ENCODE measurements at regions of chr2 and their contacts with region 1.

Region 1: GRCh38 chr2:230781130-230781797 is 68.6 kb downstream of the CAB39 start:
- DNase-seq: peak; percentile 84
- H3K4me3 Mint-ChIP-seq: peak overlapping the region; percentile 24
- H3K27ac Mint-ChIP-seq: peak overlapping the region; percentile 77
- H3K4me1 Mint-ChIP-seq: peaks cover 68% of the 10 kb centered on the region
- H3K27me3 Mint-ChIP-seq: no peaks in the 10 kb centered on the region

Region 2: GRCh38 chr2:230738391-230738811 is 42.9 kb before region 1 on chr2:
- intact Hi-C with region 1: no loop called
- DNase-seq: peak; percentile 54
- H3K4me3 Mint-ChIP-seq: peak overlapping the region; percentile 24
- H3K27ac Mint-ChIP-seq: peak overlapping the region; percentile 63
- H3K4me1 Mint-ChIP-seq: peaks cover 62% of the 10 kb centered on the region
- H3K27me3 Mint-ChIP-seq: no peaks in the 10 kb centered on the region

Region 3: GRCh38 chr2:230758566-230759480 is 22.4 kb before region 1 on chr2:
- intact Hi-C with region 1: loop called (anchors 2 kb)
- DNase-seq: no peak
- H3K4me3 Mint-ChIP-seq: peak overlapping the region; percentile 27
- H3K27ac Mint-ChIP-seq: peak overlapping the region; percentile 77
- H3K4me1 Mint-ChIP-seq: peaks cover 64% of the 10 kb centered on the region
- H3K27me3 Mint-ChIP-seq: no peaks in the 10 kb centered on the region

Region 4: GRCh38 chr2:230770804-230771203 is 10.5 kb before region 1 on chr2:
- intact Hi-C with region 1: loop called (anchors 1 kb)
- DNase-seq: no peak
- H3K4me3 Mint-ChIP-seq: peak overlapping the region; percentile 15
- H3K27ac Mint-ChIP-seq: peak overlapping the region; percentile 44
- H3K4me1 Mint-ChIP-seq: peaks cover 74% of the 10 kb centered on the region
- H3K27me3 Mint-ChIP-seq: no peaks in the 10 kb centered on the region

Region 5: DNA sequence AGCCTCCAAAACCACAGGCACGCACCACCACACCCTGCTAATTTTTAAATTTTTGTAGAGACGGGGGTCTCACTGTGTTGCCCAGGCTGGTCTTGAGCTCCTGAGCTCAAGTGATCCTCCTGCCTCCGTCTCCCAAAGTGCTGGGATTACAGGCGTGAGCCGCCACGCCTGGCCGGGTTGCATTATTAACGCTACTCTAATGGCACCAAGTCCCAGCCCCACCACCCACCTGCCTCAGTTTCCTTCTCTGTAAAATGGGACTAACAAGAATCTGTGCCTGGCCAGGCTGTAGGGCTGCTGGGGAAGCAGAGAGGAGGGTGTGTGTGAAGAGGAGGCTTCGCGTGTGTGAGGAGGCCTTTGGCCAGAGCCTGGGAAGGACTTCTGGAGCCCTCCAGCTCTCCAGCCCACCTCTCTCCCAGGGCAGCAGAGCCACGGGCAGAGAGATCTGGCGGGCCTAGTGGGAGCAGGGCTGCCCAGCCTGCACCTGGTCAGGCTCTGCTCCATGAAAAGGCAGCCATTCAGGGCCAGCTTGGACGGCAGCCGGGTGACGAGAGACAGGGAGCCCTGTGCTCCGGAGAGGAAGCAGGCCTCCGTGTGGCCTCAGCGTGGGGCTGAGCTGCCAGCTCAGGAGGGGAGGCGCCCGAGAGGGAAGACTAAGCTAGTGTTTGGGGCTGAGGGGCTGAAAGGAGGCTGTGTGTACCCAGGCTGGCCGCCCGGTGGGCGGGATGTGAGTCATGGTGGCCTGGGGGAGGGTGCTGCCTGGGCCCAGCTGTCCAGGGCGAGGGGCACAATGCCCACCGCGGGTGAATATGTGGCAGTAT is 606.9 kb after region 1 on chr2:
- intact Hi-C with region 1: no loop called
- DNase-seq: no peak
- H3K4me3 Mint-ChIP-seq: no peak overlapping the region
- H3K27ac Mint-ChIP-seq: no peak overlapping the region
- H3K4me1 Mint-ChIP-seq: peaks cover 2% of the 10 kb centered on the region
- H3K27me3 Mint-ChIP-seq: peaks cover 10% of the 10 kb centered on the region